ENCODE measurements at regions of chr9 and their contacts with region 1.

Region 1: DNA sequence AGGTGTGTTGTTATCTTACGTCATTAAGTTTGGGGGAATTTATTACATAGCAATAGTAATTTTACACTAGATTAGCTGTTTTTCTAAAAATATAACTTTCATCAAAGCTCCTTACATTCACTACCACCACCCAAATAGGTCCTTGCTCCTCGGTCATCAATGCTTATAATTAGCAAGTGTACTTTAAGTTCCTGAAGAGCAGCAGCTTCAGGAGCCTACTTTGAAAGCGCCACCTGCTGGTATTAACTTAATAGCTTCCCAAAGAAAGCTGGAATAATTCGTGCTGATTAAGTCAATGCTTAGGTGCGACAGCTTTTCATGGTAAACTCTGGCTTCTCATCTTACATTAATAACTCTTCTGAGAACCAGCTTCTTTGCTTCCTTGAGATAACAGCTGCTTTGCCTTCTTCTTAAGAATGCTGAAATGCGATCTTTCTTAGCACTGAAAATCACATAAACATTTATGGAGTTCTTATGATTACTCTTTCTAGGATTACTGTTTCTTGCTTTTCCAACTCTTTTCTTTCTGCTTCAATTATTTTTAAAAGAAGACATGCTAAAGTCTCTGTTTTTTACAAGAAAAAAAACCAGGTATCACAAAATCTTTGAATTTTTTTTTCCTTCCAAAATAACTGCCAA is 10.0 kb upstream of the C5 start:
- DNase-seq: peak; percentile 58
- H3K4me3 Mint-ChIP-seq: no peak overlapping the region
- H3K27ac Mint-ChIP-seq: no peak overlapping the region
- H3K4me1 Mint-ChIP-seq: peaks cover 14% of the 10 kb centered on the region
- H3K27me3 Mint-ChIP-seq: peaks cover 16% of the 10 kb centered on the region

Region 2: GRCh38 chr9:121071756-121072421 is 11.8 kb after region 1 on chr9:
- CTCF ChIA-PET with region 1: interaction called, 15 read pairs
- POLR2A ChIA-PET with region 1: no interaction called
- DNase-seq: peak; percentile 35
- H3K4me3 Mint-ChIP-seq: peak overlapping the region; percentile 84
- H3K27ac Mint-ChIP-seq: peak overlapping the region; percentile 94
- H3K4me1 Mint-ChIP-seq: peaks cover 58% of the 10 kb centered on the region
- H3K27me3 Mint-ChIP-seq: no peaks in the 10 kb centered on the region

Region 3: DNA sequence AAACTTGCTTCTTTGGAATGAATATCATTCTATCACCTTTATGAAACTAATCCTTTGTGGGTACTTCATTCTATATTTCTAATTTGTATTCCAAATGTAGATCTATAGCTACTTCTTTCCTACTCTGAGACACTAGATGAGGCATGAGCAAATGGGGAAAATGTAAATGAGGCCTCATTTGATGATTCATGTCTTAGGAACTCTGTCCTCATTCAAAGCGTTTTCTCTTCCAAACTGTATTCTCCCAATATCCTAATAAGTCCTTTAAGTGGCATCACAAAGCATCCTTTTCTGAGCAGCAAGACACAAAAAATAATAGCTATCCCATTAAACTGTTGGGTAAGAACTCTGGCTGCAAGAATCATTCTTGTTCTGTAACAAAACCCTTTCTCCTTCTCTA is 976.9 kb after region 1 on chr9:
- CTCF ChIA-PET with region 1: no interaction called
- POLR2A ChIA-PET with region 1: no interaction called
- DNase-seq: no peak
- H3K4me3 Mint-ChIP-seq: no peak overlapping the region
- H3K27ac Mint-ChIP-seq: no peak overlapping the region
- H3K4me1 Mint-ChIP-seq: no peaks in the 10 kb centered on the region
- H3K27me3 Mint-ChIP-seq: no peaks in the 10 kb centered on the region